A673 (cell line): ENCODE measurements at regions of chr5 and their contacts with region 1.

Region 1: DNA sequence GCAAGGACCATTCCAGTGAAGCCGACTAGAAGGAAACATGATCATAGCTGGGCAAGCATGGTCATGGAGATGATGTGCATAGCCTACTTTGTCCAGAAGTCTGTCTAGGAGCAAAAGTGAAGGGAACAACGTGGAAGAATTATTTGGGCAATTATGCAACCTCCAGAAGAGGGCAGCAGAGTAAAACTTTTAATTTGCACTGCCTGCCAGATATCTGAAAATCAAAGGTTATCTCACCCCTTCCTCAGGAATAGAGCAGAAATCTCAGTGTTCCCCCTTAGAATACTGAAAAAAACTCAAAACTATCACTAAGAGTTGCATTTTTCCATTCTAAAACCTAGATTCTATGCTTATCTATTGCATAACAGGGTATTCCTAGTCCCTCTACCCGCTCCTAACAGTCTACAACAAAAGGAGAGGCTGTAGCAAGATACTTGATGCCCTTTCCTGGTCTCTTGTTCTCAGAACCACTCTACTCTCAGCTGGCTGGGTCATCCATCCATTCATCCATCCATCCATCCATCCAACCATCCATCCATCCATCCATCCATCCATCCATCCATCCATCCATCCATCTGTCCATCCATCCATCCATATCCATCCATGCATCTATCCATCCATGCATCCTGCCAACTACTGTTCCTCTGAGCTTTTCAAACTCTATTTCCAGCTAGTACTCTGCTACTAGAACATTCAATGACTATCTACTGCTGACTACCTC is 8.4 kb upstream of the SETD9 start:
- DNase-seq: peak; percentile 63
- H3K4me3 ChIP-seq: no peak overlapping the region
- H3K27ac ChIP-seq: no peak overlapping the region
- H3K4me1 ChIP-seq: no peaks in the 10 kb centered on the region
- H3K27me3 ChIP-seq: no peaks in the 10 kb centered on the region
- CTCF ChIP-seq: peak; percentile 72

Region 2: GRCh38 chr5:56585975-56586709 is 314.9 kb before region 1 on chr5:
- CTCF ChIA-PET with region 1: no interaction called
- POLR2A ChIA-PET with region 1: no interaction called
- intact Hi-C with region 1: no loop called
- DNase-seq: no peak
- H3K4me3 ChIP-seq: no peak overlapping the region
- H3K27ac ChIP-seq: no peak overlapping the region
- H3K4me1 ChIP-seq: no peaks in the 10 kb centered on the region
- H3K27me3 ChIP-seq: peaks cover 18% of the 10 kb centered on the region
- CTCF ChIP-seq: no peak

Region 3: DNA sequence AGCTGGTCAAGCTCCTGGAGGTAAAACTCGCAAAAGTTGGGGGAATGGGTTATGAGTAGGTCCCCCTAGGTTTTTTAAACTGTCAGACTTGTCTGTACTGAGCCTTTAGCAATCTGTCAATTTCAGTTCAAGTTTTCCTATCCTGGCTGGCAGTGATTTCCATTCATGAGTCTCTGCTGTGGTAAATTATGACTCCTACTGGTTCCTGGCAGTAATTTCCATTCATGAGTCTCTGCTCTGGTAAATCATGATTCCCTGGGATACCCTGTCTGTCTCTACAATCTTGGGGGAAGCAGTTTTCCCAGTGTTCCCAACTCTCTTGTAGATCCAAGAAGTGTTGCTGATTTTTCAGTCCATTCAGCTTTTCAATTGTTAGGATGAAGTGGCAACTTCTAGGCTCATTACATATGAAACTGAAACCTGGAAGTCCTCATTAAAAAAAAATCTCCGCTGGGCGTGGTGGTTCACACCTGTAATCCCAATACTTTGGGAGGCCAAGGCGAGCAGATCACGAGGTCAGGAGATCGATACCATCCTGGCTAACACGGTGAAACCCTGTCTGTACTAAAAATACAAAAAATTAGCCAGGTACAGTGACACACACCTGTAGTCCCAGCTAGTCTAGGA is 181.5 kb after region 1 on chr5:
- CTCF ChIA-PET with region 1: no interaction called
- POLR2A ChIA-PET with region 1: no interaction called
- intact Hi-C with region 1: loop called (anchors 5 kb)
- DNase-seq: peak; percentile 30
- H3K4me3 ChIP-seq: no peak overlapping the region
- H3K27ac ChIP-seq: no peak overlapping the region
- H3K4me1 ChIP-seq: no peaks in the 10 kb centered on the region
- H3K27me3 ChIP-seq: no peaks in the 10 kb centered on the region
- CTCF ChIP-seq: peak; percentile 56

Region 4: GRCh38 chr5:57102905-57103255 is 201.9 kb after region 1 on chr5:
- CTCF ChIA-PET with region 1: no interaction called
- POLR2A ChIA-PET with region 1: no interaction called
- intact Hi-C with region 1: no loop called
- DNase-seq: no peak
- H3K4me3 ChIP-seq: no peak overlapping the region
- H3K27ac ChIP-seq: no peak overlapping the region
- H3K4me1 ChIP-seq: no peaks in the 10 kb centered on the region
- H3K27me3 ChIP-seq: no peaks in the 10 kb centered on the region
- CTCF ChIP-seq: no peak

Region 5: GRCh38 chr5:57137401-57137800 is 236.4 kb after region 1 on chr5:
- CTCF ChIA-PET with region 1: interaction called, 8 read pairs
- POLR2A ChIA-PET with region 1: no interaction called
- intact Hi-C with region 1: loop called (anchors 2 kb)
- DNase-seq: no peak
- H3K4me3 ChIP-seq: no peak overlapping the region
- H3K27ac ChIP-seq: no peak overlapping the region
- H3K4me1 ChIP-seq: no peaks in the 10 kb centered on the region
- H3K27me3 ChIP-seq: no peaks in the 10 kb centered on the region
- CTCF ChIP-seq: no peak

Region 6: DNA sequence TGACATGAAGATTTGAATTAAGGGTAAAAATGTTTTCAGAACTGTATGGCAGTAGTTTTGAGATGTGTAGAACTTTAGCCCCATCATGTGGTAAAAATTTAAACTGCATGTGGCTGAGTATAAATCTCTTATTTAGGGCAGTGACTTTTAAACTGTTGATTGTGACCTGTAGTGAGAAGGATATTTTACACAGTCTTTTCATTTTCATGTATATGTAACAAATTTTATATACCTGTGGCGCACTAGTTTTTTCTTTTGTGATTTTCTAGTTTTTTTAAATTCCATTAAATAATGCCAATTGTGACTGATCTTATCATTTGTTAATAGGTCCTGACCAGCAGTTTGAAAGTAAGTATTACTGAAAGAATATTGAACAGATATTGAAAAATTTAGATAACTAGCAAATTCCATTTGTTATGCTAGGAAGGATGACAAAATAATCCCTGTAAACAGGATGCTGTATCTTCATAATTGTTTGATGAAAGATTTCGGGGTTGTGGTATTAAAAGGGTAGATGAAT is 320.1 kb after region 1 on chr5:
- CTCF ChIA-PET with region 1: no interaction called
- POLR2A ChIA-PET with region 1: no interaction called
- intact Hi-C with region 1: loop called (anchors 2 kb)
- DNase-seq: peak; percentile 68
- H3K4me3 ChIP-seq: no peak overlapping the region
- H3K27ac ChIP-seq: no peak overlapping the region
- H3K4me1 ChIP-seq: peaks cover 3% of the 10 kb centered on the region
- H3K27me3 ChIP-seq: no peaks in the 10 kb centered on the region
- CTCF ChIP-seq: peak; percentile 84

Region 7: DNA sequence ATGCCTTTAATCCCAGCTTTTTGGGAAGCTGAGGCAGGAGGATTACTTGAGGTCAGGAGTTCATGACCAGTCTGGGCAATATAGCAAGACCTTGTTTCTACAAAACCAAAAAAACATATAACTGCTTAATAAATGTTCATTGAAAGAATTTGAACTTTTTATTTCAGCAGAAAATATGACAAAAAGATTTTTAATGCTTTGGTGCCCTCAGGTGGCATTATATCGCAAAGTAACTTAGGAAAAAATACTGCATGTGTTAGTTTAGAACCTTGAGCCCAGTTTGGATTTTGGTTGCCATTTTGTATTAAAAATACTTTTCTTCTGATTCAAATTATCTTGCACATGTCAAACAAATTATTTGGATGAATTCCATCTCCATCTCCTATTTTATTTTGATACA is 376.1 kb after region 1 on chr5:
- CTCF ChIA-PET with region 1: no interaction called
- POLR2A ChIA-PET with region 1: no interaction called
- intact Hi-C with region 1: loop called (anchors 2 kb)
- DNase-seq: peak; percentile 40
- H3K4me3 ChIP-seq: no peak overlapping the region
- H3K27ac ChIP-seq: no peak overlapping the region
- H3K4me1 ChIP-seq: no peaks in the 10 kb centered on the region
- H3K27me3 ChIP-seq: no peaks in the 10 kb centered on the region
- CTCF ChIP-seq: peak; percentile 51